IMR-90 (cell line): ENCODE measurements at regions of chr9 and their contacts with region 1.

Region 1: GRCh38 chr9:489198-490197 is 274.8 kb downstream of the DOCK8 start:
- DNase-seq: no peak
- ATAC-seq: peak; percentile 70
- H3K4me3 ChIP-seq: no peak overlapping the region
- H3K27ac ChIP-seq: no peak overlapping the region
- H3K4me1 ChIP-seq: no peaks in the 10 kb centered on the region
- H3K27me3 ChIP-seq: peaks cover 8% of the 10 kb centered on the region
- CTCF ChIP-seq: no peak
- POLR2A ChIP-seq: no peak
- RAD21 ChIP-seq: no peak

Region 2: GRCh38 chr9:642014-642413 is 152.5 kb after region 1 on chr9:
- CTCF ChIA-PET with region 1: no interaction called
- POLR2A ChIA-PET with region 1: no interaction called
- dilution Hi-C with region 1: no loop called
- in situ Hi-C with region 1: no loop called
- intact Hi-C with region 1: no loop called
- DNase-seq: no peak
- ATAC-seq: no peak
- H3K4me3 ChIP-seq: no peak overlapping the region
- H3K27ac ChIP-seq: no peak overlapping the region
- H3K4me1 ChIP-seq: no peaks in the 10 kb centered on the region
- H3K27me3 ChIP-seq: no peaks in the 10 kb centered on the region
- CTCF ChIP-seq: no peak
- POLR2A ChIP-seq: no peak
- RAD21 ChIP-seq: no peak

Region 3: DNA sequence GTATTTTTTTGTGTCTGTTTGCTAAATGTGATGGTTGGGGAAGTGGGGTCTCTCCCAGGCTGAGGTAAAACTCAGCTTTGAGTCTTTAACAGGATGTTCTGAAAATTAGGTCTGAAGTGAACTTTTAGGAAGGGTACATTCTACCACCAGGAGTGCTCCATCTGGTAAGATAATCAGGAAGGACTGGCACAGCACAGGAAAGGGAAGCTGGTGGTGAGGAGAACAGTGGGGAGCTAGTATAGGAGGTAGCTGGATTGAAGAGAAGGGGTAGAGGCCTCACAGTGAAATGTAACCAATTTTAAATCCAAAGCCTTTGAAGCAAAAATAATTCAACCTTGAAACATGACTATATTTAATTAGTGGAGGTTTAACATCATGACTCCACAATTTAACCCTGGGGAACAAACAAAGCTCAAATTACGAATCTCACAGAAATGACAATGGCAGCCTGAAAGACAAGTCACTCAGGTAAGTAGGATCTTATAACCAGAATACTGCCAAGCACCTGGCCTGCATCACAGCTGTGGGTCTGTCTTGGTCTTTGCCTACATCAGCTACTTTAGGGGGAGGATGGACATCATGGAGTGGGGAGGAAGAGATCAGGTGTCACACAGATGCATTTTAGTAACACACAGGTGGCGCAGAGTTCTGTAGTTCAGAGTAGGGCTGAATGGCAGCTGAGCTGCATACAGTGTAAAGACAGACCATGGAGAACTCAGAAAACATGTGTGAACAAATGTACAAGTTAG is 1006.0 kb after region 1 on chr9:
- CTCF ChIA-PET with region 1: no interaction called
- POLR2A ChIA-PET with region 1: interaction called, 15 read pairs
- dilution Hi-C with region 1: no loop called
- in situ Hi-C with region 1: no loop called
- intact Hi-C with region 1: no loop called
- DNase-seq: no peak
- ATAC-seq: no peak
- H3K4me3 ChIP-seq: no peak overlapping the region
- H3K27ac ChIP-seq: no peak overlapping the region
- H3K4me1 ChIP-seq: no peaks in the 10 kb centered on the region
- H3K27me3 ChIP-seq: no peaks in the 10 kb centered on the region
- CTCF ChIP-seq: no peak
- POLR2A ChIP-seq: no peak
- RAD21 ChIP-seq: no peak